ENCODE measurements at regions of chr20 and their contacts with region 1.

Region 1: GRCh38 chr20:112396-112795 is 24.9 kb downstream of the DEFB125 start:
- DNase-seq: peak; percentile 6
- H3K4me3 ChIP-seq: no peak overlapping the region
- H3K27ac ChIP-seq: no peak overlapping the region
- H3K4me1 ChIP-seq: no peaks in the 10 kb centered on the region
- H3K27me3 ChIP-seq: peaks cover 4% of the 10 kb centered on the region
- CTCF ChIP-seq: no peak

Region 2: DNA sequence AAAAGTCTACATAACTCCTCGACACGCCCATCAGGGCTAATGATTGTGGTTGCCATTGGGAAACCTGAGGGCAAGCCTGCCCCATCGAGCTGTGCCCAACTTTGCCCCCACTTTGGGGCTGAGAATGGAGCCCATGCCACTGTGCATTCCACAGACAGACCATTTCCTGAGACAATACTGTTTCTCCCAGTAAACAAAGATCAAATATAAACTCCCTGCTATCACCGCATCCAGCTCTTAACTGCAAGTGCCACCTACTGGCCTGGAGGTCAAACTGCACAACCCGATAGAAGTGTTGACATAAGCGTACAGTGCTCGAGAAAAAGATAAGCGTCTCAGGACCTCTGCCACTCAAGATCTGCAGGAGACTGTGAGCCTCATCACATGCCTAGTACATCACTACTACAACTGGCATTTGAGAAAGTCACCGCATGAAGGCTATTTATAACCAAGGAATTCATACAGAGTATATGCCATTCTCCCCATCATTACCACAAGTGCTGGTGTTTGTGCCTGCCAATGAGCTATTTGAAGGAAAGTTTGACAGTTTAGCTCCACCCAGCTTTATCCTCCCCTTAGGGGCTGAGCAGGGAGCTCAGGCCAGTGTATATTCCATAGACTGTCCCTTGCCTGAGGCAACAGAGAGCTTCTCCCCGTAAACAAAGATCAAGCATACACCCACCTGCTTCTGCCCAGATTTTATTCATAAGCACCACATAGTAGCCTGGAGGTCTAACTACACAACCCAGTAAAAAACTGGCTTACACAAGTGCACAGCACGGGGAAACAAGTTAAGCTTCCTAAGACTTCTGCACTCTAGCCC is 25.5 kb after region 1 on chr20:
- CTCF ChIA-PET with region 1: interaction called, 11 read pairs
- dilution Hi-C with region 1: no loop called
- in situ Hi-C with region 1: no loop called
- intact Hi-C with region 1: no loop called
- DNase-seq: no peak
- H3K4me3 ChIP-seq: no peak overlapping the region
- H3K27ac ChIP-seq: no peak overlapping the region
- H3K4me1 ChIP-seq: no peaks in the 10 kb centered on the region
- H3K27me3 ChIP-seq: no peaks in the 10 kb centered on the region
- CTCF ChIP-seq: peak; percentile 36 to 43

Region 3: DNA sequence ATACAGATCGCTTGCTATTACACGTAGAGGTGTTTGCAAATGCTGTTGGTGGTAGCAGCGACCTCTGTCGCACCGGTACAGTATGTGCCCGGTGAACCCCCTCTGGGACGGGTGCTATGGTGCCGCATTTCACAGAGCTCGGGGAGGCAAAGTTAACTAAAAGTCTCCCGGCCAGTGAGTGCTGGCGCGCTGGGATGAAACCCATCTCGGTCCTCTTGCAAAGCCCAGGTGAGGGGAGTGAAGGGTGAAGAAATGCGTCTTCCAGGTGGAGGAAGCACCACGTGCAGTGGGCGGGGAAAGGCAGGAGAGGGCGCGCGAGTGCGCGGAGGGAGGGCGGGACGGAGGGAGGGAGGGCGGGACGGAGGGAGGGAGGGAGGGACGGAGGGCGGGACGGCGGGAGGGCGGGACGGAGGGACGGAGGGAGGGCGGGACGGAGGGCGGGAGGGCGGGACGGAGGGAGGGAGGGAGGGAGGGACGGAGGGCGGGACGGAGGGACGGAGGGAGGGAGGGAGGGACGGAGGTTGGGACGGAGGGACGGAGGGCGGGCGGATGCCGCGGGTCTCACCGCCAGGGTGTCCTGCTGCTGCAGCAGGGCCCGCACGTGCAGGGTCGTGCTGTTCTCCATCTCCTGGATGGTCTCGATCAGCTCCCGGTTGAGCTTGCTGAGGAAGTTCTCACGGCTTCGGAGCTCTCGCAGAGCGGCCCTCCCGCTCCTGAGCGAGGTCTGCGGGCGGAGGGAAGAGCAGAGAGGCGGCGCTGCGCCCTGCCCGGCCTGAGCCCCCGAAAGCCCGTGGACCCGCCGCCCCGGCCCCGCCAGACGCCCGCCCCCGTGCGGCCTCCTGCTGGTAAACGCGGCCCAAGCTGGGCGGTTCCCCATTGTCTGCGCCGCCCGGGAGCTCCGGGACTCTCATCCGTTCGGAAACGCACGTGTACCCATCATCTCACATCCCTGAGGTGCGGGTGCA is 166.5 kb after region 1 on chr20:
- CTCF ChIA-PET with region 1: no interaction called
- dilution Hi-C with region 1: no loop called
- in situ Hi-C with region 1: no loop called
- intact Hi-C with region 1: no loop called
- DNase-seq: no peak
- H3K4me3 ChIP-seq: peak overlapping the region in 1 of 3 experiments; percentile 12
- H3K27ac ChIP-seq: no peak overlapping the region
- H3K4me1 ChIP-seq: no peaks in the 10 kb centered on the region
- H3K27me3 ChIP-seq: peaks cover 2% of the 10 kb centered on the region
- CTCF ChIP-seq: peak in 1 of 2 donors; percentile 12